GM10248 (cell line): ENCODE measurements at regions of chr19 and their contacts with region 1.

Region 1: DNA sequence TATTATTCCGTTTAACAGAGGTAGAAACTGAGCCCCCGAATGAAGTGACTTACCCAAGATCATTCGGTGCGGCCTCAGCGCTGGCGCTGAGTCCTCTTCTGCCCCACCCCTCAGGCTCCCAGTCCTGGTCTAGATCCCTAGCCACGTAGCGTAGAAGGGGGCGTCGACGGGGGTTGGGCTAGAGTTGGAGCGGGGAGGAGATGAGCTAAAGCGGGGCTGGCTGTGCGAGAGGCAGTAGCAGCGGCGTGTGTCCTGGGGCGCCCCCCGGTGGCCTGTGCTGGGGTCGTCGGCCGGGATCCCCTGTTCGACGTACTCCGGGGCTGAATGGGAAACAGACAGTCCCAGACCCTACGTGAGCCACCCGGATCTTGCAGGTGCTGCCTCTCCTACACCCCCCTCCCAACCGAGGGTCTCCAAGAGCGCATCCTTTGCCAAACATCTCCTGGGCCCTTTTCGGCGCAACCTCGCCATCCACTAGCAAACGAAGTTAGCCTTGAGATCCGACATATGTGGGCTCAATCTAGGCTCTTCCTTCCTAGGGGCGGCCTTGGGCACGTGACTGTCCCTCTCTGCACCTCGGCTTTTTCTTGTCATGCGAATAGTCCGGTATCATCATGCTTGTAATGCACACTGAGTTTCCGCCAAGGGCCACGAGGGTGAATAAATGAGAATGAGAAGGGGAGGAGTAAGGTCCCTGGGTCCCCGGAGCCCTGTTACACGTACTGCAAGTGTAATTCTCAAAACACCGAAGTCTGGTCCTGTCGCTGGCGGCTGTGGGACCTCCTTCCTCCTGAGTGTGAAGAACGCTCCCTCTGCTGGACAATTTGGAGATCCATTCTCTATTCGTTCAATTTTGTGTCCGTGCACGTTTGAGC is 47.7 kb downstream of the CYP4F22 start:
- DNase-seq: peak; percentile 92
- CTCF ChIP-seq: peak; percentile 78

Region 2: DNA sequence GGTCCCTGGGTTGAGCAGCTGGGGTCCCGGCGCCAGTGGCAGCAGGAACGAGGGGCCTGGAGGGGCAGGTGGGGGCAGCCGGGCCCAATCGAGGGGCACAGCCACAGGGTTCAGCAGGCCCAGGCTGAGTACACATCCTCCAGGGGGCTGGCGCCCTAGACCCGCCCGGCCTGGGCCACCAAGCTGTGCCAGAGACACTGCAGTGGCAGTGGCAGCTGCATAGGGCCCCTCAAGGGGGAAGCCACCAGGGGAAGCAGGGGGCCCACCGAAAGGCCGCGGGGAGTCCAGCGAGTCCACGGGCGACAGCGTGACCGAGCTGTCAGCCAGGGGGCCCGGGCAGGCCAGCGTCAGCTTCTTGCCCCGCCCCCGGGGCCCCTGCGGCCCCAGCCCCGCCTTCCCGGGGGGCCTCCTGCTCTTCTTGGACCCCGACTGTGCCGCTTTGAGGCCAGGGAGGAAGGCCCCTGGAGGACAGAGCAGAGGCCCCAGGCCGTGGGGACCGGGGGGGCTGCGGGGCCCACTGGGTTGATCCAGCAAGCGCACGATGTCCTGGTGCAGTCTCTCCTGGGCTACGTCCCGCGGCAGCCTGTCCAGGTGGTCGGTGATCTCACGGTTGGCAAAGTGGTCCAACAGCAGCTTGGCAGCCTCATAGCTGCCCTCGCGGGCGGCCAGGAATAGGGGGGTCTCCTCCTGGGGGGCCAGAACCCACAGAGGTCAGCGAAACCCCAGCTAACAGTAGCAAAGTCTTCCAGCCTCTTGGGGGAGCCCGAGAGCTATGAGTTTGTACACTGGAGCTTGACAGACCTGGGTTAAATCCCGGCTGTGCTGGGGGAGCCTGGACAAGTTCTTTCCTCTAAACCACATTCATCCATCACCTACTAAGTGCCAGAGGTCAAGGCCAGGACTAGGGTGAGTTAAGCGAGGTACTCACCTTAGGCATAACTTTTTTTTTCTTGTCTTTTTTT is 394.7 kb before region 1 on chr19:
- CTCF ChIA-PET with region 1: interaction called, 13 read pairs
- POLR2A ChIA-PET with region 1: no interaction called
- DNase-seq: peak; percentile 70
- CTCF ChIP-seq: peak; percentile 68

Region 3: GRCh38 chr19:15177269-15178116 is 378.5 kb before region 1 on chr19:
- CTCF ChIA-PET with region 1: interaction called, 24 read pairs
- POLR2A ChIA-PET with region 1: no interaction called
- DNase-seq: peak; percentile 90
- CTCF ChIP-seq: peak; percentile 96

Region 4: GRCh38 chr19:15418588-15419412 is 137.2 kb before region 1 on chr19 and contains the start of gene AKAP8L:
- CTCF ChIA-PET with region 1: interaction called, 50 read pairs
- POLR2A ChIA-PET with region 1: interaction called, 5 read pairs
- DNase-seq: peak; percentile 100
- CTCF ChIP-seq: peak; percentile 85

Region 5: DNA sequence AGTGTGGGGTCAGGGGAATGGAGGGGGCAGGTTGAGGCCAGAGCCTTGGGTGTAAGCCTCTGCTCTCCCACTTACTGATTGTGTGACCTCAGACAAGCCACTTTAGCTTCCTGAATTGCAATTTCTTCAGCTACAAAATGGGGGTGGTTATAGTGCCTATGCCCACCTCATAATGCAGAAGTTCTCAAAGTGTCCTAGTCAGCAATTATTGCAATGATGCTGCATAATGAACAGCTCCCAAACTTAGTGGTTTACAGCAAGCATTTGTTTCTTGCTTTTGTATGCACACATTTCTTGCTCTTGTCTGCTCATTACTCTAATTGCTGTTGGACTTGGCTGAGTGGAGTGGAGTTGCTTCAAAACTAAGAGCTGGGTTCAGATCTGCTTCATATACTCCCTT is 11.7 kb before region 1 on chr19:
- CTCF ChIA-PET with region 1: interaction called, 18 read pairs
- POLR2A ChIA-PET with region 1: interaction called, 6 read pairs
- DNase-seq: no peak
- CTCF ChIP-seq: no peak

Region 6: DNA sequence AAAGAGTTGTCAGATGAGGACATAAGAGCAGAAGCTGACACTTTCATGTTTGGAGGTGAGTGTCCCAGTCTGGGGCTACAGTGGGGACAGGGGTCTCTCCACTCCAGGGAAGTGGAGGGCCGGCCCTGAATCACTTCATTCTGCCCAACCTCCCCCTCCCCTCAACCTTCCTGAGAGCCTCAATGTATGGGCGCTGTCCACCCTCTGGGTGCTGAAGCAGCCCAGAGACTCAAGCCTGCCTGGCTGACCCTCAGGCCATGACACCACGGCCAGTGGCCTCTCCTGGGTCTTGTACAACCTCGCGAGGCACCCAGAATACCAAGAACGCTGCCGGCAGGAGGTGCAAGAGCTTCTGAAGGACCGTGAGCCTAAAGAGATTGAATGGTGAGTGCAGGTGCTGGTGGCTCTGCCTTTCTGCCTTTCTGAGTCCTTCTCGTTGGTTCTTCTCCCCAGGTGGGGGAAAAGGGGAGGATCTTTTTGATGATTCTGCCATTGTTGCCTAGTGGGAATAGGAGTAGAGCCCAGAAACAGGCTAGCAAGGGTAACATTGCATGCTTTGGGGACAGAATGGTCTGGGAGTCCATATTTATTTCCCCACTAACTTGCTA is 67.8 kb after region 1 on chr19:
- CTCF ChIA-PET with region 1: no interaction called
- POLR2A ChIA-PET with region 1: no interaction called
- DNase-seq: no peak
- CTCF ChIP-seq: no peak